B cell (primary cell): ENCODE measurements at regions of chr10 and their contacts with region 1.

Region 1: GRCh38 chr10:133318494-133319127 is 9.9 kb downstream of the ZNF511 start:
- DNase-seq: peak; percentile 77
- ATAC-seq: peak; percentile 92
- H3K4me3 ChIP-seq: peak overlapping the region in 4 of 5 experiments; percentile 18 to 44 (median 28)
- H3K4me3 Mint-ChIP-seq: peak overlapping the region; percentile 71
- H3K27ac ChIP-seq: no peak overlapping the region
- H3K27ac Mint-ChIP-seq: no peak overlapping the region
- H3K4me1 ChIP-seq: peaks cover 9 to 15% of the 10 kb centered on the region in 2 donors
- H3K4me1 Mint-ChIP-seq: peaks cover 18% of the 10 kb centered on the region
- H3K27me3 ChIP-seq: peaks cover 0 to 14% (median 7%) of the 10 kb centered on the region in 4 experiments
- H3K27me3 Mint-ChIP-seq: peaks cover 24% of the 10 kb centered on the region
- CTCF ChIP-seq: peak; percentile 92

Region 2: DNA sequence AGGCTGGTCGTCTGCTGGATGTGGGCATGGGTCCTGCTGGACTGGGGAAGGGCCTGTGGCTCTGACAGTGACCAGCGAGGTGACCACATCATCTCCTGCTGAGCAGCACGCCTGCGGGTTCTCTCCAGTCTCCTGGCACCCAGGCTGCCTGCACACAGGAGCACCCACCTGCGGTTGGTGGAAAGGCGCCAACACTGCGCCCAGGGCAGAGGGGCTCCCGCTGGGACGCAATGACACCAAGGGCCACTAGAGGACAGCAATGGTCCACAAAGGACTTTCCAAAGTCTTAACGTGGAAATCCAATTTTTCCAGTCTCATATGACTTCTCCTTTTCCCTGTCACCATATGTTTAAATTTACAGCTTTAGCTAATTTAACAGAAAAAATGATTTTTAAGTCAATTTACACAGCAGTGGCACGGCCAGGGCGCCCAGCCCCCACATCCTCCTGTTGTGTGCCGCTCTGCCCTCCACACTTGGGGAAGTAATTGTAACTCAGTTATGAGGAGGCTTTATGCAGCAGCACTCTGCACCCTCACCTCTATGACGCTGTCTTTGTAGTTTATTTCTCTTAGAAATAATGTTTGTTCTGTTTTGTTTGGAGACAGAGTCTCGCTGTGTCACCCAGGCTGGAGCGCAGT is 414.3 kb before region 1 on chr10:
- CTCF ChIA-PET with region 1: no interaction called
- POLR2A ChIA-PET with region 1: no interaction called
- intact Hi-C with region 1: loop called (anchors 2 kb)
- DNase-seq: peak; percentile 40
- ATAC-seq: peak; percentile 61
- H3K4me3 ChIP-seq: no peak overlapping the region
- H3K4me3 Mint-ChIP-seq: no peak overlapping the region
- H3K27ac ChIP-seq: no peak overlapping the region
- H3K27ac Mint-ChIP-seq: no peak overlapping the region
- H3K4me1 ChIP-seq: no peaks in the 10 kb centered on the region
- H3K4me1 Mint-ChIP-seq: peaks cover 3% of the 10 kb centered on the region
- H3K27me3 ChIP-seq: peaks cover 0 to 3% (median 0%) of the 10 kb centered on the region in 4 experiments
- H3K27me3 Mint-ChIP-seq: peaks cover 24% of the 10 kb centered on the region
- CTCF ChIP-seq: peak; percentile 76